ENCODE measurements at regions of chr1 and their contacts with region 1.

Region 1: DNA sequence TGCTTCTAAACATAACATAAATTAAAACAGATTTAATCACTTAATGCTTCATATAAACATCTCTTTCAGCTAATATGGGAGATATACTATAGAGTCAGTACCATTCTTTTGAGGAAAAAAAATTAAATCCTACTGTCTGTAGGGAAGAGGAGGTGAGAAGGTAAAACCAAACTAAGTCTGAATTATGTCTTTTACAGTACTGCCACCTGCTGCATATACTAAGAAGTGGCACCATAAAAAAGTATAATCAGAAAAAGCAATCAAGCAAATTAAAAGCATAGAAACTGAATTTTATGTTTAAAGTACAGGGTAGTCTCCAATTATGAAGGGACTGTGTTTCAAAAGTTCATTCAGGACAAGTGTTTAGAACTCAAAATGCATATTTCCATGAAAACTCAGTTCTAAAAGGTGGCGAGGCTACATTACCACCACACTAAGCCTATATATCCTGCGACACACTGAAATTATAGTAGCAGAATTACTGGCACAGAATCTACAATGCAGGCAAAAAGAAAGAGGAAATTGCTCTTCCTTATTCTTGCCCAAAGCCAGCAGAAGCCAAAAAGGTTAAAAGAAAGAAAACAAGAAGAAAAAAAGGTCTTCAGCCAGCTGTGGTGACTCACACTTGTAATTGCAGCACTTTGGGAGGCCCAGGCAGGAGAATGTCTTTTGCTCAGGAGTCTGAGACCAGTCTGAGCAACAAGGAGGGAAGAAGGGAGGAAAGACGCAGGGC is 9.0 kb downstream of the NSL1 start:
- DNase-seq: no peak
- H3K4me3 ChIP-seq: no peak overlapping the region
- H3K27ac ChIP-seq: no peak overlapping the region
- H3K4me1 ChIP-seq: no peaks in the 10 kb centered on the region
- H3K27me3 ChIP-seq: no peaks in the 10 kb centered on the region
- CTCF ChIP-seq: peak in 2 of 3 experiments; percentile 29 to 51
- POLR2A ChIP-seq: no peak

Region 2: DNA sequence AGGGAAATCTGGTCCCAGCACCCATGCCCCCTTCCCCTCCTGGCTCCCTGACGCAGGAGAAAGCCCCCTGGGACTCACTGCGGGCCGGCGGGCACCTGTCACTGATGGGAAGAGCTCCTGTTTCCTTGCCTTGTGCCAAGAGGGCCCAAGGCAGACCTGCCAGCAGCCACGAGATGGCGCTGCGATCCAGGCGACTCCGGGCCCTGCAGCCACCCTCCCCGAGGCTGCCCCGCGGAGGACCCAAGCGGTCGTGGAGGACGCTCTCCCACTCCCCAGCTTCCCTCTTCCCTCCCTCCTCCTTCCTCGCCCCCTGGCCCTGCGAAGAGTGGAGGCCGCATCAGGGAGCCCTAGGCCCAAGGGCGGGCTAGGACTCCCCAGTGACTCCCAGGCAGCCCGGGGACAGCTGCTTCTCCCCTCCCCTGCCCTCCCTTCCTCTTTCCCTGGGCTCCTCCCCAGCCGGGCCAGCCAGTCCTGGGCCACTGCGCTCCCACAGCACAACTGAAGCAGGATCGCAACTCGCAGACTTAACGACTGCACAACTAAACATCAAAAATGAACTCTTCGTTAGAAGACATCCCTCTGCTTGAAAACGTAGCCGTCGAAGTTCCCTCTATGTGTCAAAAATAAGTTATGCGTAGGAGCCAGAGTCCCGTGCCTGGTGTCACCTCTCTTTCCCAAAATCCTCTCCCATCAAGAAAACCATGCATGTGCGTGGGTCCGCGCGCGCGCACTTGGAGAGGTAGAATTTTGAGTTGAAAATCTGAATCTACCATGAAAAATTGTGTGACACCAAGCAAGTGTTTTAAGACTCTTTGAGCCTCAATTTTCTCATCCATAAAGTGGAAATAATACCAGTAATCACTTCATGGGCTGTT is 117.1 kb before region 1 on chr1:
- intact Hi-C with region 1: loop called (anchors 5 kb)
- DNase-seq: peak; percentile 86
- H3K4me3 ChIP-seq: peak overlapping the region; percentile 51 to 73
- H3K27ac ChIP-seq: peak overlapping the region; percentile 39 to 72
- H3K4me1 ChIP-seq: peaks cover 8% of the 10 kb centered on the region
- H3K27me3 ChIP-seq: no peaks in the 10 kb centered on the region
- CTCF ChIP-seq: peak; percentile 75 to 94 (median 86)
- POLR2A ChIP-seq: no peak

Region 3: DNA sequence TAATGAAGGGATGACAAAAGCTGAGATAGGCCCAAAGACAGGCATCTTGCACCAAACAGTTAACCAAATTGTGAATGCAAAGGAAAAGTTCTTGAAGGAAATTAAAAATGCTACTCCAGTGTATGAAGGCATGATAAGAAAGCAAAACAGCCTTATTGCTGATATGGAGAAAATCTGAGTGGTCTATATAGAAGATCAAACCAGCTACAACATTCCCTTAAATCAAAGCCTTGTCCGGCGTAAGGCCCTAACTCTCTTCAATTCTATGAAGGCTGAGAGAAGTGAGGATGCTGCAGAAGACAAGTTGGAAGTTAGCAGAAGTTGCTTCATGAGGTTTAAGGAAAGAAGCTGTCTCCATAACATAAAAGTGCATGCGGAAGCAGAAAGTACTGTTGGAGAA is 237.4 kb after region 1 on chr1:
- intact Hi-C with region 1: no loop called
- DNase-seq: no peak
- H3K4me3 ChIP-seq: no peak overlapping the region
- H3K27ac ChIP-seq: no peak overlapping the region
- H3K4me1 ChIP-seq: no peaks in the 10 kb centered on the region
- H3K27me3 ChIP-seq: no peaks in the 10 kb centered on the region
- CTCF ChIP-seq: no peak
- POLR2A ChIP-seq: no peak

Region 4: DNA sequence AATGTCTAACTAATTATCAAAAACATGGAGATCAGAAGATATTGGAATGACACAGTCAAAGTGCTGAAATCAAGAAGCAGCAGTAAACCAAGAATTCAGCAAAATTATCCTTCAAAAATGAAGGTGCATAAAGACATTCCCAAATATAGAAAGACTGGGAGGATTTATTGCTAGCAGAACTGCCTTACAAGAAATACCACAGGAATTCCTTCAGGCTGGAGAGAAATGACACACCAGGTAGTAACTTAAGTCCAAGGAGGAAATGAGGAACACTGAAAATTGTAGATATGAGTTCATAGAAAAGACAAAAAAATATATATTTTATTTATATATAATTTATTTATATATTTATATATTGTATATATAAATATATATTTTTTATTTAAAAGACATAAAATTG is 485.6 kb after region 1 on chr1:
- intact Hi-C with region 1: no loop called
- DNase-seq: no peak
- H3K4me3 ChIP-seq: no peak overlapping the region
- H3K27ac ChIP-seq: no peak overlapping the region
- H3K4me1 ChIP-seq: no peaks in the 10 kb centered on the region
- H3K27me3 ChIP-seq: no peaks in the 10 kb centered on the region
- CTCF ChIP-seq: no peak
- POLR2A ChIP-seq: no peak